Heart left ventricle (tissue), 16 donors: ENCODE measurements at regions of chr2 and their contacts with region 1.

Region 1: GRCh38 chr2:112645310-112646101 is at the start of gene SLC20A1:
- DNase-seq: peak; percentile 97 to 99 (median 97)
- ATAC-seq: peak; percentile 96 to 99 (median 97)
- H3K4me3 ChIP-seq: peak within 1 kb of the TSS; percentile 73 to 98 (median 86)
- H3K27ac ChIP-seq: peak within 1 kb of the TSS; percentile 86 to 99 (median 98)
- H3K4me1 ChIP-seq: peaks cover 2 to 81% (median 32%) of the 10 kb centered on the region in 12 donors
- H3K27me3 ChIP-seq: no peaks in the 10 kb centered on the region
- CTCF ChIP-seq: peak in 11 of 12 donors; percentile 15 to 62 (median 41)
- POLR2A ChIP-seq: peak; percentile 96 to 100
- total RNA-seq, gene SLC20A1: 5.6 to 51.7 (median 12.0) TPM

Region 2: GRCh38 chr2:112626604-112627059 is 18.9 kb before region 1 on chr2:
- intact Hi-C with region 1: loop called in 4 of 10 experiments (anchors 1 to 2 kb)
- DNase-seq: peak; percentile 57 to 82 (median 62)
- ATAC-seq: peak; percentile 69 to 79 (median 74)
- H3K4me3 ChIP-seq: peak overlapping the region in 4 of 12 donors; percentile 10 to 34 (median 12)
- H3K27ac ChIP-seq: peak overlapping the region in 11 of 12 donors; percentile 56 to 87 (median 77)
- H3K4me1 ChIP-seq: peaks cover 0 to 79% (median 26%) of the 10 kb centered on the region in 12 donors
- H3K27me3 ChIP-seq: no peaks in the 10 kb centered on the region
- CTCF ChIP-seq: peak; percentile 70 to 91 (median 85)
- POLR2A ChIP-seq: no peak

Region 3: GRCh38 chr2:112685271-112685884 is 39.9 kb after region 1 on chr2:
- intact Hi-C with region 1: loop called in 1 of 10 experiments (anchors 5 kb)
- DNase-seq: no peak
- ATAC-seq: no peak
- H3K4me3 ChIP-seq: no peak overlapping the region
- H3K27ac ChIP-seq: no peak overlapping the region
- H3K4me1 ChIP-seq: peaks cover 0 to 31% (median 0%) of the 10 kb centered on the region in 12 donors
- H3K27me3 ChIP-seq: no peaks in the 10 kb centered on the region
- CTCF ChIP-seq: peak in 1 of 12 donors; percentile 14
- POLR2A ChIP-seq: no peak

Region 4: DNA sequence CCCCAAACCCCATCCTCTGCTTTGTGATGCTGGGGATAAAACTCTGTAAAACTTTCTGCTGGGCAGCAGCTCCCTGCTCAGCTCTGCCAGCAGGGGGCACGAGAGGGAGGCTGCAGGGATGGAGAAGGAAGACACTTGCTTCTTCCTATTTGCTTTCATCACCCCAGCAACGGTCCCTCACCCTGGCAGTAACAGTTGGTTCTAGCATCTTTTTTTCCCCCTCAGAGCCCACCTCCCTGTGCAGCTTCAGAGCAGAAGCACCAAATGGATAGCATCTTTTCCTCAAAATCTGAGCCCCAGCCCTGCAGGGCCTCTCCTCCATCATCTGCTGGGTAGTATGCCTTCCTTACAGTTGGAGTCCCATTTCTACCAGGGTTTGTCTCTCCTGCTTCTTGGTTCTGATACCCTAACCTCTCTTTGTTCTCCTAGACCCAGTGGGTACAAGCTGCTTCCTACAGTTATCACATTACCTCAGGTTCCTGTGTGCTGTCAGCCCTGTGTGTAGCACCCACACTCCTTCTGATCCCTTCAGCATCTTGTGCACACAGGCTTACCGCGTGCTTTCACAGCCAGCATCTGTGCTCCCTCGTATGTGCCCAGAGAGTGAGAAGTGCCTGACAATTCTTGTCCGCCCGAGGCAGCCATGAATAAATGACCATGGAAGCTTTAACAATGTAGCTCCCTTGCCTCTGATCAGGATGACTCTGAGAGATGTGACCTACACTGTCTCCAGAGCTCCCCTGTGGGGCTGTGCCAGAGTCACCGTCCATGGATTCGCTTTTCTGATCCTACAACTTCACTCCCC is 104.5 kb after region 1 on chr2:
- intact Hi-C with region 1: no loop called
- DNase-seq: peak; percentile 61 to 90 (median 68)
- ATAC-seq: peak in 3 of 4 donors; percentile 73 to 74 (median 73)
- H3K4me3 ChIP-seq: no peak overlapping the region
- H3K27ac ChIP-seq: no peak overlapping the region
- H3K4me1 ChIP-seq: peaks cover 0 to 4% (median 0%) of the 10 kb centered on the region in 12 donors
- H3K27me3 ChIP-seq: no peaks in the 10 kb centered on the region
- CTCF ChIP-seq: peak; percentile 82 to 93 (median 86)
- POLR2A ChIP-seq: no peak